Calu3 (cell line): ENCODE measurements at regions of chr7 and their contacts with region 1.

Region 1: GRCh38 chr7:54788664-54789063 is 29.7 kb upstream of the SEC61G start:
- DNase-seq: peak; percentile 66
- H3K4me3 Mint-ChIP-seq: no peak overlapping the region
- H3K27ac Mint-ChIP-seq: peak overlapping the region; percentile 79
- H3K4me1 Mint-ChIP-seq: peaks cover 64% of the 10 kb centered on the region
- H3K27me3 Mint-ChIP-seq: no peaks in the 10 kb centered on the region
- CTCF ChIP-seq: peak; percentile 88

Region 2: GRCh38 chr7:54563329-54563916 is 225.2 kb before region 1 on chr7:
- CTCF ChIA-PET with region 1: no interaction called
- intact Hi-C with region 1: no loop called
- DNase-seq: no peak
- H3K4me3 Mint-ChIP-seq: no peak overlapping the region
- H3K27ac Mint-ChIP-seq: no peak overlapping the region
- H3K4me1 Mint-ChIP-seq: peaks cover 8% of the 10 kb centered on the region
- H3K27me3 Mint-ChIP-seq: no peaks in the 10 kb centered on the region
- CTCF ChIP-seq: no peak

Region 3: DNA sequence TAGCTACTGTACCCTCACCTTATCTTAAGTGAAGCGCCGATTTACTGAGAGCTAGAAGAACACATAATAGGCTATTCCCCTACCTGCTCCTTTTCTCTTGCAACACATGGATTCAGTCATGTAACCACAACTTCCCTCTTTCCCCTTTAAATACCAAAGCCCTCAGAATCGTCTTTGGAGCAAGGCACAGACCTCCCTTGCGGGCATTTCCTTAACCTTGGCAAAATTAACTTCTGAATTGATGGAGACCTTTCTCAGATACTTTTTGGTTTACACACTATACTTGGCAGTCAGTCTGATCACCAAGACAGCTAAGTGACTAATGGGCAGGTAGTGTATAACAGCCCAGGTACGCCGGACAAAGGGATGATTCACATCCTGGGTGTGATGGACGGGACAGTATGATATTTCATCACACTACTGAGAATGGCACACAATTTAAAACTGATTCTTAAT is 43.0 kb after region 1 on chr7:
- CTCF ChIA-PET with region 1: interaction called, 47 read pairs
- intact Hi-C with region 1: no loop called
- DNase-seq: peak; percentile 62
- H3K4me3 Mint-ChIP-seq: peak overlapping the region; percentile 15
- H3K27ac Mint-ChIP-seq: peak overlapping the region; percentile 61
- H3K4me1 Mint-ChIP-seq: peaks cover 22% of the 10 kb centered on the region
- H3K27me3 Mint-ChIP-seq: no peaks in the 10 kb centered on the region
- CTCF ChIP-seq: no peak

Region 4: GRCh38 chr7:54839538-54840213 is 51.0 kb after region 1 on chr7:
- CTCF ChIA-PET with region 1: interaction called, 47 read pairs
- intact Hi-C with region 1: loop called (anchors 1 kb)
- DNase-seq: peak; percentile 95
- H3K4me3 Mint-ChIP-seq: peak overlapping the region; percentile 13
- H3K27ac Mint-ChIP-seq: peak overlapping the region; percentile 27
- H3K4me1 Mint-ChIP-seq: peaks cover 31% of the 10 kb centered on the region
- H3K27me3 Mint-ChIP-seq: no peaks in the 10 kb centered on the region
- CTCF ChIP-seq: peak; percentile 96

Region 5: GRCh38 chr7:55073945-55074499 is 285.4 kb after region 1 on chr7:
- CTCF ChIA-PET with region 1: interaction called, 3 read pairs
- intact Hi-C with region 1: loop called (anchors 5 kb)
- DNase-seq: peak; percentile 93
- H3K4me3 Mint-ChIP-seq: peak overlapping the region; percentile 66
- H3K27ac Mint-ChIP-seq: peak overlapping the region; percentile 98
- H3K4me1 Mint-ChIP-seq: peaks cover 97% of the 10 kb centered on the region
- H3K27me3 Mint-ChIP-seq: no peaks in the 10 kb centered on the region
- CTCF ChIP-seq: no peak